ENCODE measurements at regions of chr13 and their contacts with region 1.

Region 1: GRCh38 chr13:106536244-106537034 is 977 bp upstream of the EFNB2 start:
- DNase-seq: peak; percentile 92
- ATAC-seq: peak; percentile 29
- H3K4me3 Mint-ChIP-seq: peak overlapping the region; percentile 87
- H3K27ac Mint-ChIP-seq: no peak overlapping the region
- H3K4me1 Mint-ChIP-seq: peaks cover 12% of the 10 kb centered on the region
- H3K27me3 Mint-ChIP-seq: peaks cover 26% of the 10 kb centered on the region

Region 2: DNA sequence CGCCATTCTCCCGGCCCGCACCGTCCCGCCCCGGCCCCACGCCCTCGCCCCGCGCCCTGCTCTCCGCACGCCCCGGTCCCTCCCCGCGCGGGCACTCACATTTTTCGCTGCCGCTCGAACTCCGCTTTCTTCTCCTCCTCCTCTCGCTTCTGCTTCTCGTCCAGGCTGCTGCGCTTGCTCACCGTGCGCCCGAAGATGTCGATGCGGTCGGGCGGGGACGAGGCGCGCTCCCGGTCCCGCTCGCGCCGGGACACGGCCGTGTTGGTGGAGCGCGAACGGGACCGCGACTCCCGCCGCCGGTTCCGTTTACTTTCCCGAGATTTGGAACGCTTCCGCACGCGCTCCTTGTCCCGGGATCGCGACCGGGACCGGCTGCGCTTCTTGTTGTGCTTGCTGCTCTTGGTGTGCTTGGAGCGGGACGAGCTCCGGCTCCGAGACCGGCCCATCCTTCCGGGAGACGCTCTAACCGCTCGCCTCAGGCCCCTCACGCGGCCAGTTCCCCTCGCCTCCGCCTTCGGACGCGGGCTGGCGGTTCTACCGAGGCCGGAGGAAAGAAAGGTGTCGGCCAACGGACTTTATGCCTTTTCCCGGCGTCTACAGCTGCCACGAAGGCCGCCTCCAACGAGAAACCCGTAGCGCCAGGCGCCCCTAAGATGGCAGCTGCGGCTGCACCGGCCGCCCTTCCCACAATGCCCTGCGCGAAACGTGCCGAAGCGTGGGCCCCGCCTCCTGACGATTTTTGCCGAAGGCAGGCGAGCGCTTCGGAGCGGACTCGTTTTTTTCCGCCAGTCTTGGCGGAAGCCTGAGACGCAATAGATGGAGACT is 31.2 kb after region 1 on chr13 and contains the start of gene ARGLU1:
- POLR2A ChIA-PET with region 1: interaction called, 15 read pairs
- DNase-seq: peak; percentile 98
- ATAC-seq: peak; percentile 79
- H3K4me3 Mint-ChIP-seq: peak within 1 kb of the TSS; percentile 100
- H3K27ac Mint-ChIP-seq: peak within 1 kb of the TSS; percentile 91
- H3K4me1 Mint-ChIP-seq: peaks cover 38% of the 10 kb centered on the region
- H3K27me3 Mint-ChIP-seq: no peaks in the 10 kb centered on the region
- total RNA-seq, gene ARGLU1: 171 to 173 TPM